Calu3 (cell line): ENCODE measurements at regions of chrX and their contacts with region 1.

Region 1: GRCh38 chrX:14398725-14399124 is 130.6 kb upstream of the GLRA2 start:
- DNase-seq: peak; percentile 37
- H3K4me3 Mint-ChIP-seq: no peak overlapping the region
- H3K27ac Mint-ChIP-seq: peak overlapping the region; percentile 73
- H3K4me1 Mint-ChIP-seq: peaks cover 14% of the 10 kb centered on the region
- H3K27me3 Mint-ChIP-seq: no peaks in the 10 kb centered on the region
- CTCF ChIP-seq: no peak

Region 2: DNA sequence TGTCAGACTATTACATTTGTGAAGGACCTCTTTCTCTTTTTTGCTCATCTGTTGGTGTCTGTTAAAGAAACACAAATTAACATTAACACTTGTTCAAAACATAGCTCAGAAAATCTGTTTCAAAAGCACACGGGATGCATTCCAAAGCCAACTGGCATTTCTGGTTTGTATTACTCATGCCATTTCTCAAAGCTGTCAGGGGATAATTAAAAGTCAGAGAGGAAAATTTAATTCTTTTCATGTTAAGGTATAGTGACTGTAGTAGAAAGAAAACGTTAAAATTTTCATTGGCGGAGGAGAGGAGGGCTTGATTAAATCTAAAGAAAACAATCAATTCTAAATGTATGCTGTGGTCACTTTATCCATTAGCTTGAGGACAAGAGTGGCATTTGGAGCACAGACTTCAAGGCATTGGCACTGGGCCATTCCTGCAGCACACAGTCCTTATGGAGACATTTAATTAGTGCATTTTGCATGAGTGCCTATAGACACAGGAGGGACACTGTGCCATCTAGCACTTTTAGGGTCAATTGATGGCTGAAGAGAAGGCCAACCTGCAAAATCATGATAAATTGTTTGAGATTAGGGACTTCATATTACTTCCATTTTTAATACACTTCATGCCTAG is 109.5 kb after region 1 on chrX:
- CTCF ChIA-PET with region 1: no interaction called
- intact Hi-C with region 1: loop called (anchors 5 kb)
- DNase-seq: no peak
- H3K4me3 Mint-ChIP-seq: no peak overlapping the region
- H3K27ac Mint-ChIP-seq: peak overlapping the region; percentile 11
- H3K4me1 Mint-ChIP-seq: peaks cover 62% of the 10 kb centered on the region
- H3K27me3 Mint-ChIP-seq: no peaks in the 10 kb centered on the region
- CTCF ChIP-seq: no peak

Region 3: DNA sequence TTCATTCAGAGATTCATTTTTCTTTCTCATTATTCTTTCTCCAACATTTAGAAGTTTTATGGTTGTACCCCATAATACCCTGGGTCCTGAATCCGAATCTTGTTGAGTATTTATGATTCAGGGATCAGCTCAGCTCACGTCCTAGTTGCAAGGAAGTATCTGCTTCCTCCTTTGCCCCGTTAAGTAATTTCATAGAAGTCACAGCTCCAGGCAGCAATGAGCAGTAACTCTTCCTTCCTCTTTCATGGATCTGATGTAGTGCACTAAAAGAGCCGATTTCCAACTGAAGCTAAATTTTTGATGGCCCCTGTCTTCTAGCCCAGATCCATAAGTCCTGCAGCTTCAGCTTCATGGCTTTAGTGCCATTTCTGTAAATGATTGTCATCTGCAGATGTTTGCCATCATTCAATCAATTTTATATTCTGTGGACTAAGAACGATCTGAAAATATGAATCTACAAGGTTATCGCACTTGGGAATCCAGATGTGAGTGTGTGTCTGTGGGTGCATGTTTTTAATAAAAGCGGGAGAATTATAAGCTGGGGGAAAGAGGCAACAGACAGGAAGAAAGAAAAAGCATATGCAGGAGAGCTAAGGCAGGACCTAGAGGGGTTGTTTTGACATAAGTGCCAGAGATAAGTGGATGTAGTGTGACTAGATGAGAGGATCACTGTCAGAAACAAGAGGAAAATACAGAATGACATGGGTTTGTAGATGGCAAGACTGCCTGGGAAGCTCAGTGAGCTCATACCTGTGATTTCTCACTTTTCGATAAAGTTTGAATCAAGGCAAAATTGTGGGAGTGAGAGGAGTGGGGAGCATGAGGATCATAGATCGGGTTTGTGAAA is 968.0 kb after region 1 on chrX:
- CTCF ChIA-PET with region 1: no interaction called
- intact Hi-C with region 1: no loop called
- DNase-seq: no peak
- H3K4me3 Mint-ChIP-seq: no peak overlapping the region
- H3K27ac Mint-ChIP-seq: no peak overlapping the region
- H3K4me1 Mint-ChIP-seq: no peaks in the 10 kb centered on the region
- H3K27me3 Mint-ChIP-seq: no peaks in the 10 kb centered on the region
- CTCF ChIP-seq: no peak